Activated naive CD4-positive, alpha-beta T cell treated with anti-CD3 and anti-CD28 coated beads for 36 hours (primary cell): ENCODE measurements at regions of chr18 and their contacts with region 1.

Region 1: GRCh38 chr18:26648509-26649192 is 100.3 kb upstream of the KCTD1 start:
- DNase-seq: no peak
- H3K4me3 Mint-ChIP-seq: no peak overlapping the region
- H3K27ac Mint-ChIP-seq: no peak overlapping the region
- H3K4me1 Mint-ChIP-seq: no peaks in the 10 kb centered on the region
- H3K27me3 Mint-ChIP-seq: peaks cover 20% of the 10 kb centered on the region

Region 2: DNA sequence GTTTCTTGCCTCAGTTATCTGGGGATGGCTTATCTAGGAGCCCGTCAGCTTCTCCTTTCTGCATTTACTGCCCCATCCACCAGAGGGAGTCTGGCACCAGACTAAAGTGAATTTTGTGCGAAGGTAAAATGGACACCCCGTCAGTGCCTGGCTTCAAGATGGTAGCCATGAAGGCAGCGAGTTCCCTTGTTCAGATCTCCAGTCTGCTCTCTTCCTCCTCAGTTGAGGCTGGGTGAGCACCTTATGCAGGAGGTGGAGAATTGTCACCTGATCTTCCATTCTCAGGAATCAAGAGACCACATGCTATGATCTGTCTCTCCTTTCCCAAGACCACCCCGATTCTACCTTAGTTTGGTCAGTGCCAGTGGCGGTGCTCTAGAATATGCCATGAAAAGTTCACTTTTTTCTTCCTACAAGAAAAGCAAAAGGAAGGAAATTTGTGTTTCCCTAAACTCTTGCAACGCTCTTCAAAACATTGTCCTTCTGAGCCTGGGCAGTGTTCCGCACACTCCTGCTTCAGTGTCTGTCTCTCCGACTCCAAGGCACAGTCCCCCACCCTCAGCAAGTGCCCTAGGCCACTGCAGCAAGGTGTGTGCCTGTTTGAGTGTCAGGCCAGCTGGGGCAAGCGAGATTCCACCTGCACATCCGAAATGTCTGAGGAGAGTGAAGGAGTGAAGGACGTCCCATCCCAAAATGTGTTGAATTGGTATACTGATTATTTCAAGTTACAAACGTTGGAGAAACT is 726.8 kb before region 1 on chr18:
- CTCF ChIA-PET with region 1: interaction called, 4 read pairs
- intact Hi-C with region 1: loop called (anchors 2 kb)
- DNase-seq: peak; percentile 65
- H3K4me3 Mint-ChIP-seq: no peak overlapping the region
- H3K27ac Mint-ChIP-seq: no peak overlapping the region
- H3K4me1 Mint-ChIP-seq: no peaks in the 10 kb centered on the region
- H3K27me3 Mint-ChIP-seq: peaks cover 3% of the 10 kb centered on the region

Region 3: GRCh38 chr18:26017929-26018328 is 630.7 kb before region 1 on chr18:
- CTCF ChIA-PET with region 1: no interaction called
- intact Hi-C with region 1: no loop called
- DNase-seq: no peak
- H3K4me3 Mint-ChIP-seq: no peak overlapping the region
- H3K27ac Mint-ChIP-seq: no peak overlapping the region
- H3K4me1 Mint-ChIP-seq: peaks cover 3% of the 10 kb centered on the region
- H3K27me3 Mint-ChIP-seq: no peaks in the 10 kb centered on the region

Region 4: DNA sequence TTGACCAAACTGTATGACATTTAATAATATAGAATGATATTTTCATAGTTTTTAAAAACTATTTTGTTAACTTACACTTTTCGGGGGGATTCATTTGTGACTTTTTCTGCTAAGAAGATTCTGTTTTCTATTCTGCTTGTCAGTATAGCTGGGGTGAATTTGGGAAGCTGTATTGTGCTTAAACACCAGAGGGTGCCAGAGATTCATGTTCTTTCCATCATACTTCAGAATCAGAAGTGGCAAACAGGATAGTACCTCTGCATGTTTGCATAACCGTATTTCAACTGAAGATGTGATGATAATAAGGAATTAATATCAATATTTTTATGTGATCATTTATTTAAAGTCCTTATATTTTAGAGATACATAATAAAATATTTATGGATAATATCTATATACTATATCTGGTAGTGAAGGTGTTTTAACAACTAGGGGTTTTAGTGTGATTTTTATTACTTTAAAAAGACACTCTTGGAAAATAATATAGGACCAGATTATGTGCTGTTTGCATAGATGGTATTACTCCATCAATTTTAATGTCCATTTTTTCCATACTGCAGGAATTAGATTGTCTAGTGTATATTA is 341.4 kb before region 1 on chr18:
- CTCF ChIA-PET with region 1: no interaction called
- intact Hi-C with region 1: loop called (anchors 1 kb)
- DNase-seq: peak; percentile 23
- H3K4me3 Mint-ChIP-seq: no peak overlapping the region
- H3K27ac Mint-ChIP-seq: no peak overlapping the region
- H3K4me1 Mint-ChIP-seq: peaks cover 3% of the 10 kb centered on the region
- H3K27me3 Mint-ChIP-seq: no peaks in the 10 kb centered on the region

Region 5: DNA sequence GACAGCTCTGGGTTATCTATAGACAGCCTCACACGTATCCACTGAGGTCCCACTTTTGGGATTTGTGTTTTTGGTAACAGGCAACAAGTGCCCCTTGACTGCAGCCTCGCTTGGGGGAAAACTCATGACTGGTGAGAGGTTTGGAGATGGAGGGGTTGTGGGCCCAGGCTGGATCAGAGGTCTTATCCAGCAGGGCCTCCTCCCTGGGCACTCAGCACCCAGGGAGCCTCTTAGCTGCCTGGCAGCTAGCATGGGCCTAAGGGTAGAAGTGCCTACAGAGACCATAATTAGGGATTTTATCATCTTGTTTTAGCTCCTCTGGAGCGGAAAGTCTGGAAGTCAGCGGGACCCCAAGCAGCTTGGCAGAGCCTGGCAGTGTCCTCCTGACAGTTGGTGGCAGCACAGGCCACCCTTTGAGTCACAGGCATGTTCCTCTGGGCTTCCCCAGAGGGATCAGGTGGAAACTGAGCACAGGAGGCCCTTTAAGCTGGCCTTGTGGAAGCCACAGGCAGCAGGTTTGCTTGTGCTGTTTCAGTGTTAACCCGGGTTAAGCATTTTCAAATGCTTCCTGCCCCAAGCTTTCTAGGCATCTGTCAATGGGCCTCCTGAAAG is 243.4 kb before region 1 on chr18:
- CTCF ChIA-PET with region 1: interaction called, 3 read pairs
- intact Hi-C with region 1: loop called (anchors 1 kb)
- DNase-seq: peak; percentile 36
- H3K4me3 Mint-ChIP-seq: no peak overlapping the region
- H3K27ac Mint-ChIP-seq: no peak overlapping the region
- H3K4me1 Mint-ChIP-seq: no peaks in the 10 kb centered on the region
- H3K27me3 Mint-ChIP-seq: no peaks in the 10 kb centered on the region

Region 6: DNA sequence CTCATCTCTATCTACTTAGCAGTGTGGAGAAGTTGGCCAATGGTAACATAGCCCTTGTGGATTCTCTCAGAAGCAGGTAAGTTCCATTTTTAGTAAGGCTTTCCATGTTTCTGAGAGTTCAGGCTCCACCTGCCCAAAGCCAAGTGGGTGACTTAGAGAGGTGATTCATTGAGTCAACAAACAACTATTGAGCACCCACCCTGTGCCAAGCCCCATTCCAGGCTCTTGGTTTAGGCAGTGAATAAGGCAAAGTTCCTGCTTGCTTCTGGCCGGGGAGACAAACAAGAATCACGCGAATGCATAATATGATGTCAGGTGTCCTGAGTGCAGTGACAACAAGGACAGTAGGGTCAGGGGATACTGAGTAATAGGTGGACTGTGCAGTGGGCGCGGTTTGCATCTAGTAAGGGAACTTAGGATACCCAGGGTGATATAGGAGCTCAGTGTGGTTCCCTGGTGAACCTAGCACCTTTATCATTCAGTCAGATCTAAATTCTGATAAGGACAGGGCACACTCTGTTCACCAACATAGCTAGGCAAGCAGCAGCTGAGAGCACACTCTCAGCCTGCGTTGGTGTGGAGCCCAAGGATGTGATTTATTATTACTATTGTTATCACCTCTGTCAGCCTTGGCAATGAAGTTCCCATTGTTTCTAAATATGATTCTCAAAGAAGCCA is 68.6 kb before region 1 on chr18:
- CTCF ChIA-PET with region 1: no interaction called
- intact Hi-C with region 1: no loop called
- DNase-seq: no peak
- H3K4me3 Mint-ChIP-seq: no peak overlapping the region
- H3K27ac Mint-ChIP-seq: no peak overlapping the region
- H3K4me1 Mint-ChIP-seq: peaks cover 7% of the 10 kb centered on the region
- H3K27me3 Mint-ChIP-seq: peaks cover 31% of the 10 kb centered on the region

Region 7: GRCh38 chr18:26621161-26622026 is 27.3 kb before region 1 on chr18:
- CTCF ChIA-PET with region 1: interaction called, 3 read pairs
- intact Hi-C with region 1: loop called (anchors 1 kb)
- DNase-seq: peak; percentile 45
- H3K4me3 Mint-ChIP-seq: no peak overlapping the region
- H3K27ac Mint-ChIP-seq: no peak overlapping the region
- H3K4me1 Mint-ChIP-seq: no peaks in the 10 kb centered on the region
- H3K27me3 Mint-ChIP-seq: peaks cover 13% of the 10 kb centered on the region